Tibial artery (tissue), 4 donors: ENCODE measurements at regions of chr11 and their contacts with region 1.

Region 1: DNA sequence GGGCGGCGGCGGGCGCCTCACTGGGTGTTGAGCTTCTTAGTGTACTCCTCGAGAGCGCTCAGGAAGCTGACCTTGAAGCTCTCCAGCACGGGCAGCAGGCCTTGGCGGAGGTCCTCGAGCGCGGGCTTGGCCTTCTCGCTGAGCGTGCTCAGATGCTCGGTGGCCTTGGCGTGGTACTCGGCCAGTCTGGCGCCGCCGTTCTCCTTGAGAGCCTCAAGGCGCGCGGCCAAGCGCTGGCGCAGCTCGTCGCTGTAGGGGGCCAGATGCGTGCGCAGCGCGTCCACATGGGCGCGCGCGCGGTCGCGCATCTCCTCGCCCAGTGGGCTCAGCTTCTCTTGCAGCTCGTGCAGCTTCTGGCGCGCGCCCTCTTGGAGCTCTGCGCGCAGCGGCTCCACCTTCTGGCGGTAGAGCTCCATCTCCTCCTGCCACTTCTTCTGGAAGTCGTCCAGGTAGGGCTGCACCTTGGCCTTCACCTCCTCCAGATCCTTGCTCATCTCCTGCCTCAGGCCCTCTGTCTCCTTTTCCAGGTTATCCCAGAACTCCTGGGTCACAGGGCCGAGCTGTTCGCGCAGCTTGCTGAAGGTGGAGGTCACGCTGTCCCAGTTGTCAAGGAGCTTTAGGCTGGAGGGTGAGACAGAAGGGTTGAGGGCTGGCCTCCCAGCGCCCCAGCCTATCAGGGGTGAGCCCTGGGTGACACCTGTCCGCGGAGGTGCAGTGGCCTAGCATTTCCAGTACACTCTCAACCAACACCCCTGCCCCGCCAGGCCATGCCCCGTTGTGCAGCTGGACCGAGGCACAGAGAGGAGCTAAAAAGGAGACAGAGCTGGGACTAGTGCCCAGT is 1.4 kb downstream of the APOA1 start:
- DNase-seq: peak; percentile 83 to 95
- H3K4me3 ChIP-seq: peak overlapping the region; percentile 38 to 52
- H3K27ac ChIP-seq: peak overlapping the region; percentile 56 to 75
- H3K4me1 ChIP-seq: peaks cover 0 to 15% (median 10%) of the 10 kb centered on the region in 4 donors
- H3K27me3 ChIP-seq: no peaks in the 10 kb centered on the region
- CTCF ChIP-seq: peak in 1 of 2 experiments; percentile 48

Region 2: DNA sequence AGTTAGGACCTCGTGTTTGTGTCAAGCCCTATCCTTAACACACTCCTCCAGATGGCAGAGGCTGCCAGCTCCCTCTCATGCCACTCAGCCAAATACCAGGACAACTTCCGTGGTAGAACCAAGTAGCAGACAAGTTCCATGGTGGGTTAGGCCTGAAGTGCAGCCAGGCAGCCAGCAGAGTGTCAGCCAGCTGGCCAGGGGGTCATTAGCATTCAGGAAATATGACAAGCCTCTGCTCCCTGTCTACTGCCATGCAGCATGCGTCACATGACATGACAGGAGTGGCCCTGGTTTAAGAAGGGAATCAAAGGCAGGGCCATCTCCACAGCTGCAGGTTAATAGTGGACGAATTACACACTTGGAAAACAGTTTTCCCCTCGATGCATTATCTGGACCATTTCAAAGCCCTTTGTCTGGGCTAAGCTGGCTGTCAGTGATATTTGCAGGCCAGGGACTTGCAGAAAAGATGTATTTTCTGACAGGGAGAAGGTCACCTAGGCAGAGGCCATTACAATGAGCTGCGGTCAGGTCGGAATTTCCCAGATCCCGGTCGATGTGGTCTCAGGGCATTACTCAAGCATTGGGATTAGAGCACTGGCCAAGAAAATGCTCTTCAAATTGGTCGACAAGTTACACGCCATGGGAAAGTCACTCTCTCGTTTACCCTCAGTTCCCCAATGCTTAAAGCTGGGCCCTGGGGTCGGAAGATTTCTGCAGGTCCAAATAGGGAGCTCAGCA is 870.1 kb before region 1 on chr11:
- intact Hi-C with region 1: no loop called
- DNase-seq: no peak
- H3K4me3 ChIP-seq: no peak overlapping the region
- H3K27ac ChIP-seq: no peak overlapping the region
- H3K4me1 ChIP-seq: no peaks in the 10 kb centered on the region
- H3K27me3 ChIP-seq: no peaks in the 10 kb centered on the region
- CTCF ChIP-seq: no peak

Region 3: GRCh38 chr11:116742104-116742503 is 93.9 kb before region 1 on chr11:
- intact Hi-C with region 1: no loop called
- DNase-seq: no peak
- H3K4me3 ChIP-seq: no peak overlapping the region
- H3K27ac ChIP-seq: no peak overlapping the region
- H3K4me1 ChIP-seq: peaks cover 0 to 12% (median 2%) of the 10 kb centered on the region in 4 donors
- H3K27me3 ChIP-seq: no peaks in the 10 kb centered on the region
- CTCF ChIP-seq: no peak

Region 4: DNA sequence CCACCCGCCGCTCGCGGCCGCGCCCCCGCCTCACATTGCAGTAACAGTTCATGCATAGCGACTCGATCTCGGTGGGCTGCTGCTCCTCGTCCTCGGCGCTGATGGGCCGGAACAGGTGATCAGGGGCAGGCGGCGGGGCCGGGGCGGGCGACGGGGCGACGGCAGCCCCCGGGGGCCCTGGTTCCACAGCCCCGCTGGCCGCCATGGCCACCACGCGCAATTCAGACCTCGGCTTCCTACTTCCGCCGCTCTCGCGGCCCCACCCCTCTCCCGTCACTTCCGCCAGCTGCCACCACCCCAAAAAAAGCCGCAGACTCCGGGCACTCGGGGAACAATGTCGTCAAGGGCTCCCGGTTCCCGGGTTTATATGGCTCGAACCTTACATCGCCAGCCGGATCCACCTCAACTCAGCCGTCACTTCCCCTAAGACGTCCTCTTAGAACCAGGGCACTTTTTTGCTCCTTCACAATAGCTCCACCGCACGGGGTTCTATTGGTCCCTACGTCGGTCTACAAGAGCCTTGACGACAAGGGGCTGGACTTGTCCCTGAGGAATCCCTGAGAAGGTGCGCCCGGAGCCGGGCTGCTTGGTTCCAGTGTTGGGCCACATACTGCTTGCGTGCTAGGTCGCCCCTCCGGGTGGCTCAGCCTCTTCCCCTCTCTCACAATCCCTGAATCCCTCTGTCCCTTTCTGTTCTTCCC is 48.1 kb before region 1 on chr11 and contains the start of gene ZPR1:
- intact Hi-C with region 1: loop called (anchors 5 kb)
- DNase-seq: peak; percentile 81 to 89
- H3K4me3 ChIP-seq: peak within 1 kb of the TSS; percentile 98 to 100
- H3K27ac ChIP-seq: peak within 1 kb of the TSS; percentile 86 to 88
- H3K4me1 ChIP-seq: peaks cover 0 to 35% (median 23%) of the 10 kb centered on the region in 4 donors
- H3K27me3 ChIP-seq: peaks cover 0 to 3% of the 10 kb centered on the region in 2 donors
- CTCF ChIP-seq: peak in 1 of 2 experiments; percentile 31